Pancreas (tissue), 10 donors: ENCODE measurements at regions of chr3 and their contacts with region 1.

Region 1: DNA sequence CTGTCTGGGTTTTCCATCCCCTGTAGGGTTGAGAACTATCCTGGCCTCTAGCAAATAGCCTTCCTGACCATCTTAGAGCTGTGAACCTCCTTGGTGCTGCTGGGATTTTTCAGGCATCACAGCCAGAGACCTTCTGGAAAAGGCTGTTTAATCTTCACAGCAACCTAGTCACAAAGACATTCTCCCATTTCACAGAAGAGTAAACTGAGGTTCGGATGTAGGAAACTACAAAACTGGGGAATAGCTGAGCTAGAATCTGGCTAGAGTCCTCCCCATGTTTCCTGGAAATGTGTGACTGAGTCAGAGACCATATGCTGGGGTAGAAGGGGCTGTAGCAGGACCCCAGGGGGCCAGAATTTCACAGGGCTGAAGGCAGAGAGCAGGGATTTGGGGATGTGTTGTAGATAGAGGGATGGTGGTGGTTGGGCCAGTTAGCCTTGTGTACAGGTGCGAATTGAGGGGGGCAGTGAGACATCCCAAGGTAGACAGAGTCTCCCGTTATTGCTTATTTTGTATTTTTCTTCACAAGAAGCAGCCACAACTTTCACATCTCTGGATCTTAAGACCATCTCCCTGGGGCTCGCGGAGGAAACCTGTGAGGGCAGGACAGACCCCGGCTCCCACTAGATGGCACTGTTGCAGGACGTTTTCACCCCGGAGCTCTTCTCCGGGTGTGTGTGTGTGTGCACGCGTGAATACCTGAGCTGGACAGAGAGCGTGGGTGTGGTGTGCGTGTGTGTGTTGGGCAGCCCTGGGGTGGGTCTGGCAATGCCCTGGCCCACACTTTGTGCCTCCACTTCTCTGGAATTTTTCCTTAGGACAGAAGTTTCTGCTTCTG is 66.9 kb upstream of the PRR23C start:
- DNase-seq: peak in 5 of 6 donors; percentile 51 to 83 (median 75)
- ATAC-seq: peak; percentile 80 to 96 (median 92)
- H3K4me3 ChIP-seq: no peak overlapping the region
- H3K27ac ChIP-seq: no peak overlapping the region
- H3K4me1 ChIP-seq: peaks cover under 1 to 2% (median 1%) of the 10 kb centered on the region in 3 donors
- H3K27me3 ChIP-seq: no peaks in the 10 kb centered on the region
- CTCF ChIP-seq: peak; percentile 58 to 72 (median 63)

Region 2: GRCh38 chr3:139339219-139339906 is 227.8 kb after region 1 on chr3:
- intact Hi-C with region 1: loop called in 2 of 3 experiments (anchors 5 to 10 kb)
- DNase-seq: no peak
- ATAC-seq: no peak
- H3K4me3 ChIP-seq: no peak overlapping the region
- H3K27ac ChIP-seq: no peak overlapping the region
- H3K4me1 ChIP-seq: no peaks in the 10 kb centered on the region
- H3K27me3 ChIP-seq: no peaks in the 10 kb centered on the region
- CTCF ChIP-seq: no peak